OCI-LY7 (cell line): ENCODE measurements at regions of chr5 and their contacts with region 1.

Region 1: GRCh38 chr5:179550511-179551230 is at the start of gene RUFY1:
- DNase-seq: peak; percentile 81
- H3K4me3 ChIP-seq: peak within 1 kb of the TSS; percentile 81
- H3K27ac ChIP-seq: peak within 1 kb of the TSS; percentile 86
- H3K4me1 ChIP-seq: peaks cover 42% of the 10 kb centered on the region
- CTCF ChIP-seq: no peak
- total RNA-seq, gene RUFY1: 35.8 and 46.2 TPM in 2 replicates

Region 2: GRCh38 chr5:179568721-179569120 is 18.1 kb after region 1 on chr5:
- CTCF ChIA-PET with region 1: no interaction called
- POLR2A ChIA-PET with region 1: no interaction called
- intact Hi-C with region 1: no loop called
- DNase-seq: no peak
- H3K4me3 ChIP-seq: no peak overlapping the region
- H3K27ac ChIP-seq: no peak overlapping the region
- H3K4me1 ChIP-seq: no peaks in the 10 kb centered on the region
- CTCF ChIP-seq: no peak

Region 3: DNA sequence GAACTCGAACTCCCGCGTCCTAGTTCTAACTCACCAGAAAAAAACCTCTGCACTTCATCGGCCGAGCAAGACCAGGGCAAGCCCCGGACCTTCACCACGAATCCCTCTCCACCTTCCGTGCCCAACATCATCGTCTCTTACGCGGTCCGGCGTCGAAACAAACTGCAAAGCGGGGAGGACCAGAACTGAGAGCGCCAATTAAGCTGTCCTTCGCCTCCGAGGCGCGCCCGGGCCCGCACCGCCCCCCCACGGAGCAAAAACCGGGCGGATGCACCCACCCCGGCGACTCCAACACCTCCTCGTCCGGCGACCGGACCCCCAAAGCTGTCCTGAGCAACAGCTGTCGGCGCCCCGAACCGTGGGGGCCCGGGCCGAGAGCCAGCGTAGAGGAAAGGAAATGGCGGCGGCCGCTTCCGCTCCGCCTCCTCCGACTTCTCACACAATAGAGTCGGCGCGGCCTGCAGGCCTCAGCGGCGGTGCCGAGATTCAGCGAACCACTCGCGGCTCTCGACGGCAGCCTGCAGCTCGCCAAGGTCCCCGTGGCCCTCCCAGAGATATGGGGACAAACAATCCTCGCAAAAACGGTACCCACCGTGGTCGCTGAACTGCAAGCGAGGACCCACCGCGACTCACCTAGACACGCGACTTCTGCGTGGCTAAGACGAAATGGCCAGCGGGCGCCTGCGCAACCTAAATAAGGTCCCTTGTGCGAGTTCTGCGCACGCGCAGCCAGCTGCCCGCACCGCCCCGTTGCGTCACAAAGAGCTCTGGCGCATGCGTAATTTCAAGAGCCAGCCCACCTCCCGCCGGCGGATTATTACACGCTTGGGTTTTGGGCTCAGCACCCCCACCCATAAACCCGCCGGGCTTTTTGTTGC is 72.6 kb after region 1 on chr5 and contains the start of gene HNRNPH1:
- CTCF ChIA-PET with region 1: no interaction called
- POLR2A ChIA-PET with region 1: interaction called, 5 read pairs
- intact Hi-C with region 1: loop called (anchors 2 kb)
- DNase-seq: peak; percentile 98
- H3K4me3 ChIP-seq: peak within 1 kb of the TSS; percentile 100
- H3K27ac ChIP-seq: peak within 1 kb of the TSS; percentile 90
- H3K4me1 ChIP-seq: peaks cover 47% of the 10 kb centered on the region
- CTCF ChIP-seq: no peak; the same call in 1 of the 2 replicates
- total RNA-seq, gene HNRNPH1: 814 and 1,035 TPM in 2 replicates

Region 4: GRCh38 chr5:179749857-179750508 is 199.3 kb after region 1 on chr5:
- CTCF ChIA-PET with region 1: no interaction called
- POLR2A ChIA-PET with region 1: no interaction called
- intact Hi-C with region 1: no loop called
- DNase-seq: no peak
- H3K4me3 ChIP-seq: no peak overlapping the region
- H3K27ac ChIP-seq: no peak overlapping the region
- H3K4me1 ChIP-seq: no peaks in the 10 kb centered on the region
- CTCF ChIP-seq: no peak

Region 5: GRCh38 chr5:180071531-180072255 is 521.0 kb after region 1 on chr5 and contains the start of gene RNF130:
- CTCF ChIA-PET with region 1: no interaction called
- POLR2A ChIA-PET with region 1: no interaction called
- intact Hi-C with region 1: no loop called
- DNase-seq: peak; percentile 59
- H3K4me3 ChIP-seq: peak within 1 kb of the TSS; percentile 63
- H3K27ac ChIP-seq: no peak within 1 kb of the TSS
- H3K4me1 ChIP-seq: no peaks in the 10 kb centered on the region
- CTCF ChIP-seq: no peak
- total RNA-seq, gene RNF130: 0.08 and 0.16 TPM in 2 replicates